CD4-positive, alpha-beta memory T cell (primary cell): ENCODE measurements at regions of chr18 and their contacts with region 1.

Region 1: DNA sequence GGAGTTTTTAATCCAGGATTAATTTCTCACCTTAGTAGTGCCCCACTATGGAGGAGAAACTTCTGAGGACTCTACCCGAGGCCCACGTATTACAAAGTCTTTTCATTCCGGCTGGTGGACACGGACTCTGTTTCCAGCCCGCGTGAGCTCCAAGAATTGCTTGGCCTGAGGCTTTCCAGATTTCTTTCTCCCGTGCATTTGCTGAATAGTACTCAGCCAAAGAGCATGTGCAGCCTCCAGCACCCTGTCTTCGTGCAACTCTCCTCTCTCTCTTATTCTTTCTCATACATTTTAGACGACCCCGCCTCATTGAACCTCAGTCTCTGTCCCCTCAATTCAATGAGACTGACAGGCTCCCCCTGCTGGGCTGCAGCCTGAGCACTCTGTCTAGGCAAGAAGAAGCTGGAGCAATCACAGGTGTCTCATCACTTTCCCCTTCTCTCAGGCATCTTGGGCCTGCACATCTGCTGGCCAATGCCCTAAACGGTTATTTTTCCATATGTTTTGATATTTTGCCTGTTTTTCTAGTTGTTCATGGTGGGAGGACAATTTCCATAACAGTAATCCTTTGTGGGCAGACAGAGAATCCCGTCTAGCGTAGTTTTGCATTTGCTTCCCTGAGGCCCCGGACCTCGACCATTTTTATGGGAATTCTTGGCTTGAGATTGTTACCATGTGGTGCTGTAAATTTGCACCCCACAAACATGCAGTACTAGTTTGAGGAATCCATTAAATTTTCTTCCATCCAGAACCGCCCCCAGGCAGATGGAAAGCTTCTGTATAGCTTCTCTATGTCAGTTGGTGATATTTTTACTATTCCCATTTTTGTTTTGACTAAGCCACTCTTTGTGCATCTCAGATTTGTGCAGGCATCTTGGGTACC is 50.1 kb upstream of the LPIN2 start:
- DNase-seq: peak; percentile 63 to 78 (median 66)
- H3K4me3 ChIP-seq: peak overlapping the region in 1 of 2 donors; percentile 53
- H3K4me3 Mint-ChIP-seq: peak overlapping the region; percentile 70 to 86 (median 81)
- H3K27ac ChIP-seq: peak overlapping the region; percentile 93
- H3K27ac Mint-ChIP-seq: peak overlapping the region; percentile 91 to 100 (median 98)
- H3K4me1 ChIP-seq: peaks cover 67% of the 10 kb centered on the region
- H3K4me1 Mint-ChIP-seq: peaks cover 52 to 72% (median 64%) of the 10 kb centered on the region in 4 donors
- H3K27me3 ChIP-seq: no peaks in the 10 kb centered on the region
- H3K27me3 Mint-ChIP-seq: no peaks in the 10 kb centered on the region

Region 2: DNA sequence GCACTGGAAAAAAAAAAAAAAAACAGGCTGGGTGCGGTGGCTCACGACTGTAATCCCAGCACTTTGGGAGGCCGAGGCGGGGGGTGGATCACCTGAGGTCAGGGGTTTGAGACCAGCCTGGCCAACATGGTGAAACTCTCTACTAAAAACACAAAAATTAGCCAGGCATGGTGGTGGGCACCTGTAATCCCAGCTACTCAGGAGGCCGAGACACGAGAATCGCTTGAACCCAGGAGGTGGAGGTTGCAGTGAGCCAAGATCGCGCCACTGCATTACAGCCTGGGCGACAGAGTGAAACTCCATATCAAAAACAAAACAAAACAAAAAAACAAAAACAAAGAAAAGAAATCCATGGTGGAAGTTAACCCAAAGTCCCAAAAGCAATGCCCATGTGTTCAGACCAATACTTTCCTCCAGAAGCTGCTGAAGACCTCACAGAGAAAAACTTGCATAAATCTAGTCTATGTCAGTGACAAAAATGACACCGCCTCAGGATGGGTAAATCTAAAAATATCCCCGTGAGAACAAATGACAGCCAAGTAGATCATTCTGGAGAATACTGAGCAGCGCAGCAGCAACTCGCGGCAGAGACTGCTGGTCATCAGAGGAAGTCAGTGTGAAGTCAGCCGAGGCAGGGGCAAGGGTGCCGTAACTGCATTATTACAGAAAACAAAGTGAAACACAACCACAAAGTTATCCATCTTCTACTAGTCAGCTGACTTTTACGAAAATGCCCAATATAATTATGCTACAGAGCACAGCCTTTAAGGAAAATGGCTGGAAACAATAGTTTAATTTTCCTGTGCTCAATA is 91.1 kb before region 1 on chr18:
- CTCF ChIA-PET with region 1: interaction called, 8 read pairs
- POLR2A ChIA-PET with region 1: interaction called, 45 read pairs
- intact Hi-C with region 1: no loop called
- DNase-seq: peak; percentile 66 to 91 (median 72)
- H3K4me3 ChIP-seq: peak overlapping the region; percentile 34 to 37
- H3K4me3 Mint-ChIP-seq: peak overlapping the region; percentile 82 to 94 (median 88)
- H3K27ac ChIP-seq: peak overlapping the region; percentile 79
- H3K27ac Mint-ChIP-seq: peak overlapping the region; percentile 88 to 98 (median 96)
- H3K4me1 ChIP-seq: peaks cover 100% of the 10 kb centered on the region
- H3K4me1 Mint-ChIP-seq: peaks cover 72 to 96% (median 86%) of the 10 kb centered on the region in 4 donors
- H3K27me3 ChIP-seq: no peaks in the 10 kb centered on the region
- H3K27me3 Mint-ChIP-seq: no peaks in the 10 kb centered on the region

Region 3: GRCh38 chr18:2994603-2995432 is 68.2 kb before region 1 on chr18:
- CTCF ChIA-PET with region 1: interaction called, 651 read pairs
- POLR2A ChIA-PET with region 1: interaction called, 223 read pairs
- intact Hi-C with region 1: loop called (anchors 1 kb)
- DNase-seq: peak; percentile 75 to 84 (median 79)
- H3K4me3 ChIP-seq: peak overlapping the region in 1 of 2 donors; percentile 29
- H3K4me3 Mint-ChIP-seq: peak overlapping the region; percentile 53 to 81 (median 68)
- H3K27ac ChIP-seq: peak overlapping the region; percentile 28
- H3K27ac Mint-ChIP-seq: peak overlapping the region; percentile 61 to 94 (median 90)
- H3K4me1 ChIP-seq: peaks cover 62% of the 10 kb centered on the region
- H3K4me1 Mint-ChIP-seq: peaks cover 57 to 87% (median 73%) of the 10 kb centered on the region in 4 donors
- H3K27me3 ChIP-seq: no peaks in the 10 kb centered on the region
- H3K27me3 Mint-ChIP-seq: no peaks in the 10 kb centered on the region

Region 4: DNA sequence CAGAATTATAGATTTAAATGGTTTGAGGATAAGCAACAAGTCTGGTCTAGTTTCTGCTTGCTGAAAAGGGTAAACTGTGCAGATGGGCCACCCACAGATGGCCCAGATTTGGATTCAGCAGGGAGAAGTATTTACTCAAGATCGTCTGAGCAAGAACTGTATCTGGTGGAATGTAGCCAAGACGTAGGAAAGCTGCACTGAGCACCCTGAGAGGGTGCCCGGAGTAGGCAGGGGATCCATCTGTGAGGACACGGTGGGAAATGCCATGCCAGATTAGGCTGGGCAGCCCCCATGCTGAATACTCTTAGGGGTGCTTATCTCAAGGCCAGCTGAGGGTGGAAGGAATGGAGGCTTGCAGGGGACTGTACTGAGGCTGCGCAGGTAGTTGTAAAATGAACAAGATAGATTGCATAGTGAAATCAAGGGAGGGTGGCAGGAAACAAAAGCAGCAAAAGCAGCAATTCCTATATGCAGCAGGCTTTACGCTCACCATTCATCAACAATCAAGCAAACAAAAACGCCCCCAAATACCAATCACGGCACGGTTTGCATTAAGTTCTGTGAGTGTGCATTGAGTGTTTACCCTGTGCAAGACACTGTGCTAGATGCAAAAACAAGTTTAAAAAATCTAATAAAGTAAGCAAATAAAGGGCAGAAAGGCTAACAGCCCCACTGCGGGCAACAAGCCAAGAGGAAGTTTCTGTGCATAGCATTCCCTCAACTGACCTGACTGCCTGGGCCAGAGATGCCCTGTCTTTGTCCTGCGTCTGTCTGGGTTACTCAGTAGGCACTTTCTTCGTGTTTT is 17.9 kb before region 1 on chr18:
- CTCF ChIA-PET with region 1: interaction called, 15 read pairs
- POLR2A ChIA-PET with region 1: interaction called, 16 read pairs
- intact Hi-C with region 1: no loop called
- DNase-seq: no peak
- H3K4me3 ChIP-seq: no peak overlapping the region
- H3K4me3 Mint-ChIP-seq: peak overlapping the region in 1 of 8 donors; percentile 32
- H3K27ac ChIP-seq: no peak overlapping the region
- H3K27ac Mint-ChIP-seq: no peak overlapping the region
- H3K4me1 ChIP-seq: no peaks in the 10 kb centered on the region
- H3K4me1 Mint-ChIP-seq: peaks cover 0 to 10% (median 4%) of the 10 kb centered on the region in 4 donors
- H3K27me3 ChIP-seq: no peaks in the 10 kb centered on the region
- H3K27me3 Mint-ChIP-seq: no peaks in the 10 kb centered on the region

Region 5: GRCh38 chr18:3088449-3088848 is 25.4 kb after region 1 on chr18:
- CTCF ChIA-PET with region 1: interaction called, 13 read pairs
- POLR2A ChIA-PET with region 1: interaction called, 5 read pairs
- intact Hi-C with region 1: no loop called
- DNase-seq: no peak
- H3K4me3 ChIP-seq: no peak overlapping the region
- H3K4me3 Mint-ChIP-seq: no peak overlapping the region
- H3K27ac ChIP-seq: no peak overlapping the region
- H3K27ac Mint-ChIP-seq: peak overlapping the region in 1 of 7 donors; percentile 72
- H3K4me1 ChIP-seq: no peaks in the 10 kb centered on the region
- H3K4me1 Mint-ChIP-seq: peaks cover 0 to 7% (median 5%) of the 10 kb centered on the region in 4 donors
- H3K27me3 ChIP-seq: no peaks in the 10 kb centered on the region
- H3K27me3 Mint-ChIP-seq: no peaks in the 10 kb centered on the region

Region 6: DNA sequence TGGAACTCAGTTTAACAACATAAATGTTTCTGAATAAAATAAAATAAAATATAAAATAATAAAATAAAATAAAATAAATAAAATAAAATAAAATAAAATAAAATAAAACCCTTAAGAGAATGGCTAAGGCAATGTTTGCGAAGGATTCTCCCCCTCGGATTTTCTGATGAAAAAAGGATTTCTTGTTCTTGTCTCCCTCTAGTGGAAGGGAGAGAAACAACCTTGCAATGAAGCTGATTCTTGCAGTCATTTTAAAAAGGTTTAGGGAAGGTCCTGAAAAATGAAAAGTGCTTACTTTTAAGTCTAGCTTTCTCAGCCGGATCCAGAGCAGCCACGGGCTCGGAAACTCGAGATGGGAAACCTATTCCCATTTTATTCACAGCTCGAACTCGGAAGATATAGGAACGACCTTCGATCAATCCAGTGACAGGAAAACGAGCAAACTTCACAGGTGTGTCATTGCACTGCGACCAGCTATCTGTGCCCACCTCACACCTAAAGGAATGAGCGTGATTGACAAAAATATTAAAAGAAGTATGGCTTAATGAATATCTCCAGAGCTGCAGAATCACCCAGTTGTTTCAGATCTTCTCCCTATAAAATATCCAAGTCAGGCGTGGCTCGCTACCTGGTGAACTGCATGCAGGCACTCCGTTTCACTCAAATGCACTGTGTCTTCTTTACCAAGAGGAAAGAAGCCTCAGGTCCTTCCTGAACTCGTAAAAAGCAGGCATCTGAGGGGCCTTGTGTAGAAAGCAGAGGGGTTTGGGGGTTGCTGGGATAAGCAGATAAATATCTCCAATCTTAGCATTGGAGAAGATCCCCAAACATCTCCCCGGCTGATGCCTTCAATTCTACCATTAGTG is 88.6 kb after region 1 on chr18:
- CTCF ChIA-PET with region 1: interaction called, 17 read pairs
- POLR2A ChIA-PET with region 1: interaction called, 3 read pairs
- intact Hi-C with region 1: no loop called
- DNase-seq: peak in 4 of 5 donors; percentile 23 to 34 (median 31)
- H3K4me3 ChIP-seq: no peak overlapping the region
- H3K4me3 Mint-ChIP-seq: no peak overlapping the region
- H3K27ac ChIP-seq: no peak overlapping the region
- H3K27ac Mint-ChIP-seq: peak overlapping the region in 1 of 7 donors; percentile 46
- H3K4me1 ChIP-seq: no peaks in the 10 kb centered on the region
- H3K4me1 Mint-ChIP-seq: peaks cover 0 to 6% (median 4%) of the 10 kb centered on the region in 4 donors
- H3K27me3 ChIP-seq: no peaks in the 10 kb centered on the region
- H3K27me3 Mint-ChIP-seq: peaks cover 0 to 4% of the 10 kb centered on the region in 2 donors